Activated CD8-positive, alpha-beta T cell treated with anti-CD3 and anti-CD28 coated beads, Interleukin-2, amount 10 ng/mL, durations not matched to agents 7 days and 5 days (primary cell): ENCODE measurements at regions of chr3 and their contacts with region 1.

Region 1: DNA sequence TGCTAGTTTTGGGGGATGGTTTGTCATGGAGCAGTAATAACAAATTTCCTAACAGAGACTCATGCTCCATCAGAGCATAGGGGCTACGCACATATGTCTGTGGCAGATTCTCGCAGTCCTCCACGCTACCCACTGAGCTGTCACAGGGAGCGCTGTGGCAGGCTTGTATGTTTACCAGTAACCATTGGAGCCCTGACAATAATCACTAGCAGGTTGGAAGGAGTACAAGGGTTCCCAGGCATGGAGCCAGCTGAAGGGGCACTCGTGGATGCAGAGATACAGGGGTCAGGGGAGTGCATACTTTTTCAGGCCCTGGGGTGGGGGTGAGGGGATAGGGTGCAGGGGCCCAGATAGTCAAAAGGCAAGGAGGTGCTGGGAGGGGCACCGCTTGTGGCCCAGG is 7.9 kb upstream of the GP9 start:
- DNase-seq: no peak
- ATAC-seq: no peak
- H3K4me3 Mint-ChIP-seq: no peak overlapping the region
- H3K27ac Mint-ChIP-seq: no peak overlapping the region
- H3K4me1 Mint-ChIP-seq: peaks cover 8% of the 10 kb centered on the region
- H3K27me3 Mint-ChIP-seq: peaks cover 12% of the 10 kb centered on the region

Region 2: GRCh38 chr3:129026728-129027543 is 25.7 kb before region 1 on chr3:
- CTCF ChIA-PET with region 1: interaction called, 40 read pairs
- POLR2A ChIA-PET with region 1: interaction called, 4 read pairs
- DNase-seq: peak; percentile 96
- ATAC-seq: peak; percentile 100
- H3K4me3 Mint-ChIP-seq: peak overlapping the region; percentile 81
- H3K27ac Mint-ChIP-seq: peak overlapping the region; percentile 95
- H3K4me1 Mint-ChIP-seq: peaks cover 30% of the 10 kb centered on the region
- H3K27me3 Mint-ChIP-seq: peaks cover 2% of the 10 kb centered on the region

Region 3: DNA sequence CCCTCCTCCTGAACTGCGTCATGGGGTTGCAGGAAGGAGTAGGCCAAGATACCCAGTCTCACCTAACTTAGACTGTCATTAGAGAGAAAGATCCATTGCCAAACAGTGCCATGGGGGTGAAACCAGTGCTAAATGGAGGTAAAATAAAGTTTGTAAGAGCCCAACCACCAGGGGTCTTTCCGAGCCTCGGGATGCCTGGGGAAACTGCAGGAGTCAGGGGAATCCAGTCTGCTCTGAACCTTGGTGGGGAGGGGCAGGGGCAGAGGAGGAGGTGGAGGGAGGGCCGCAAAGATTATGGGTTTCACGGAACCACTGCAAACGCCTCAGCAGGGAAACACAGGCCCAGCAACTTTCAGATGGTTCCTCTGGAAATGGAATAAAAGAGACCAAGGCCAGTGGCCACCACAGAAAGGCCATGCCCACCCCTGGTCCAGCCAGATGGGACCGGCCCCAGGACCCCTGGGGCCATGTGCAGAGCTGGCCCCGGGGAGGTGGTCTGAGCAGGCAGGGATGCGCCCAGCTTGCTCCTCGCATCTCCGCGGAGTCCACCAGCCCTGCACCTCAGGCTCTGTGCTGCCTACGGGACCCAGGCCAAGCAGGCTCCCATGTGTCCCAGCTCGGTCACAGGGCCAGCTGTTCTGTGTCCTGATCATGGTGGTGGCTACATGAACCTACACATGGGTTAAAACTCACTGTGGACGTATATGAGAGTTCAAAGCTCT is 11.9 kb before region 1 on chr3:
- CTCF ChIA-PET with region 1: interaction called, 22 read pairs
- POLR2A ChIA-PET with region 1: no interaction called
- DNase-seq: no peak
- ATAC-seq: no peak
- H3K4me3 Mint-ChIP-seq: no peak overlapping the region
- H3K27ac Mint-ChIP-seq: no peak overlapping the region
- H3K4me1 Mint-ChIP-seq: peaks cover 14% of the 10 kb centered on the region
- H3K27me3 Mint-ChIP-seq: peaks cover 24% of the 10 kb centered on the region

Region 4: DNA sequence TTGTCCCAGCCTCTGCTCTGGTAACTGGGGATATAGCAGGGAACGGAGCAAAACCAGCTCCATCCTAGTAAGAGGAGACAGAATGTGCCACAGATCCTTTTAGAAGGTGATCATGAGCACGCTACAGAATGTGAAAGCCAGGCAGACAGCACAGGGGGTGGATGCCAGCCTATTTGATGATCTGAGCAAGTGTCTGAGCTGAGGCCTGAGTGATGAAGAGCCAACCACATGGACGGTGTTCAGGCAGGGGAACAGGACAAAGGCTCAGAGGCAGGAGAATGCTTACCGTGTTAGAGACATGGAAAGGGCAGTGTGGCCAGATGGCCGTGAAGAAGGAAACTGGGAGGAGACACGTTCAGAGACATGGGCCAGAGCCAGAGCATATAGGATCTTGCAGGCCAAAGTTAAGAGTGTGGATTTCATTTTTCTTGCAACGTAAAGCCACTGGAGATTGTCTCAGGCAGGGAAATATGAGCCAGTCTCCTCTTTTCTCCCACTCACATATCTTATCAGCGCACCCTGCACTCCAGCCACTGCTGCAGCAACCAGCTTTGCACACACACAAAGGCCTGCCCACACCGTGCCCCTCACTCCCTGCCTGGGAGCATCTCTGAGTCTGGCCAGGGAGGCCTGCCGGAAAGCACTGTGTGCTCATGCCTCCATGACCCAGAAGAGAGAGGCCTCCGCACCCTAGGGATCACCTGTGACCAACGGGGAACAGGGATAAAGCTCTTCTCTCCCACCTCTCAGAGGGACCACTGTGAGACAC is 48.9 kb after region 1 on chr3:
- CTCF ChIA-PET with region 1: interaction called, 12 read pairs
- POLR2A ChIA-PET with region 1: interaction called, 3 read pairs
- DNase-seq: no peak
- ATAC-seq: no peak
- H3K4me3 Mint-ChIP-seq: no peak overlapping the region
- H3K27ac Mint-ChIP-seq: peak overlapping the region; percentile 65
- H3K4me1 Mint-ChIP-seq: peaks cover 42% of the 10 kb centered on the region
- H3K27me3 Mint-ChIP-seq: no peaks in the 10 kb centered on the region

Region 5: GRCh38 chr3:129160891-129161859 is 108.5 kb after region 1 on chr3 and contains the start of gene ISY1:
- CTCF ChIA-PET with region 1: interaction called, 49 read pairs
- POLR2A ChIA-PET with region 1: no interaction called
- DNase-seq: peak; percentile 93
- ATAC-seq: peak; percentile 84
- H3K4me3 Mint-ChIP-seq: peak within 1 kb of the TSS; percentile 91
- H3K27ac Mint-ChIP-seq: peak within 1 kb of the TSS; percentile 99
- H3K4me1 Mint-ChIP-seq: peaks cover 36% of the 10 kb centered on the region
- H3K27me3 Mint-ChIP-seq: no peaks in the 10 kb centered on the region
- total RNA-seq, gene ISY1: 57.9 to 65.7 TPM

Region 6: DNA sequence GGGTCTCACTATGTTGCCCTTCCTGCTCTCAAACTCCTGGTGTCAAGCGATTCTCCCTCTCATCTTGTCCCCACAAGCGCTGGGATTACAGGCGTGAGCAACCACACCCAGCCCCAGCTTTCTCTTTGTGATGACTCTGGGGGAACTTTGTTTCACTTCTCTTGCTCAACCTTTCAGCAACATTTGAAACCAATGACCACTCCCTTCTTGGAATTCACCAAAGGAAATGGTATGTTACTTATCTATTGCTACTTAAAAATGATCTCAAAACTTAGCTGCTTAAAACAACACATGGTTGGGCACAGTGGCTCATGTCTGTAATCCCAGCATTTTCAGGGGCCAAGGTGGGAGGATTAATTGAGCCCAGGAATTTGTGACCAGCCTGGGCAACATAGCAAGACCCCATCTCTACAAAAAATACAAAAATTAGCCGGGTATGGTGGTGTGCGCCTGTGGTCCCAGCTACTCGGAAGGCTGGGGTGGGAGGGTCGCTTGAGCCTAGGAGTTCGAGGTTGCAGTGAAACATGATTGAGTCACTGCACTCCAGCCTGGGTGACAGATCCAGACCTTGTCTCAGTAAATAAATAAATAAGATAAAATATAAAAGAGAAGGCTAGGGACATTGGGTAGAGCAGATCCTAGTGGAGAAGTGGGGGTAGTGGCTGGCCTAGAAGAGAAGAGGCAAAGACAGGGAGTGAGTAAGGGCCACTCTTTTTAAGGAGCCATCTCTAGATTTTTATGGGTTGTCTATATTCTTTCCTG is 186.5 kb after region 1 on chr3:
- CTCF ChIA-PET with region 1: interaction called, 78 read pairs
- POLR2A ChIA-PET with region 1: interaction called, 4 read pairs
- DNase-seq: peak; percentile 70
- ATAC-seq: peak; percentile 80
- H3K4me3 Mint-ChIP-seq: peak overlapping the region; percentile 69
- H3K27ac Mint-ChIP-seq: peak overlapping the region; percentile 93
- H3K4me1 Mint-ChIP-seq: peaks cover 53% of the 10 kb centered on the region
- H3K27me3 Mint-ChIP-seq: no peaks in the 10 kb centered on the region